Adrenal gland (tissue), 19 donors: ENCODE measurements at regions of chr16 and their contacts with region 1.

Region 1: DNA sequence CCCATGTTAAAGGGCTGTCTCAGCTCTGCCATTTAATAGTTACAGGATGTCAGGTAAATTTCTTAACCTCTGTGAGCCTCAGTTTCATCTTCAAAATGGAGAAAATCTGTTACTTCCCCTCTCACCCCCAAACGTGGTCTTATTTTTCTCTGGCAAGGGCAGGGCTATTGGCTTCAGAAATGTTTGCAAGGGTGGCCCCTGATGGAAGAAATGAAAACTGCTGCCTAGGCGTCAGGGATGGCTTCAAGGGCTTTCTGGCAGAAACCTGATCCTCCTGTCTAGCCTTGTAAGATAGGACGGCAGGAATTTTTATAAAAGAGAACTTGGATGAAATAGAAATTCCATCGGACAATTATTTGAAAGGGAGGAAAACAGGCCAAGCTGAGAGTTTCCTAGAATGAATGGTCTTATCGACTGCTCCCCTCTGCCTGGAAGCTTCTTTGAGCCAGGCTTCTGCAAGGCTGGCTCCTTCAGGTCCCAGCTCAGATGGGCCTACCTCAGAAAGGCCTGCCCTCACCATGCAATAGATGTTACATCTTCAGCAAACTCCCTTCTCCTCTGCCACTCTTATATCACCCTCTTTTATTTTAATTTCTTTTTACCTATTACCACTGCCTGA is 43.0 kb upstream of the TANGO6 start:
- DNase-seq: peak; percentile 25 to 78 (median 60)
- H3K4me3 ChIP-seq: no peak overlapping the region
- H3K27ac ChIP-seq: no peak overlapping the region
- H3K4me1 ChIP-seq: no peaks in the 10 kb centered on the region
- H3K27me3 ChIP-seq: no peaks in the 10 kb centered on the region
- CTCF ChIP-seq: peak; percentile 29 to 72 (median 47)
- POLR2A ChIP-seq: no peak

Region 2: DNA sequence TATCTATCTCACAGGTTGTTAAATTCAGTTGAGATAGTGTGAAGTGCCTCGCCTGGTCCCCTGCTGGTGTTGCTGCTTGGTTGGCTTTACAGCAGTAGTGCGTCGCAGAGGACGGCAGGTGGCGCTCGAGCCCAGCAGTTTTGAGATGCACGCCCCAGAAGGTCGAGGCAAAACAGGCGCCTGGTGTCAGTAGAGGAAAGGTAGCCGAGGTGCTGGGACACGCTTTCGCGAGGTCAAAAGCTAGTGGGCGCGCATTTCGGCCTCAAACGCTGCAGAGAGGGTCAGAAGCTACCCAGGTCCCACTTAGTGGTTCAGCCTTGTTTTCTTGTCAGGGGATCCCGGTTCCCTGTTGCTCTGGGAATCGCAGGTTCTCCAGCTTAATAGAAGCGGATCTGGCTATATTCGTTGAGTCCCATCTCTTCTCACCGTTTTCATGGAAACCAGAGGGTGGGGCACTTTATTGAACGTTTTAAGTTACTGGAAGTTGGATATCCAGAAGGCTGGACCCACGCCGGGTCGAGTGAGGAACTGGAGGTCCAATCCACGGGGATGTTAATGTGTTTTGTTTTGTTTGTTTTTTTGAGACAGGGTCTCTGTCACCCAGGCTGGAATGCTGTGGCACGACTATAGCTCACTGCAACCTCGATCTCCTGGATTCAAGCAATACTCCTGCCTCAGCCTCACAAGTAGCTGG is 271.5 kb before region 1 on chr16:
- intact Hi-C with region 1: loop called in 1 of 2 experiments (anchors 10 kb)
- DNase-seq: peak; percentile 80 to 94 (median 84)
- H3K4me3 ChIP-seq: peak overlapping the region in 1 of 4 donors; percentile 25
- H3K27ac ChIP-seq: no peak overlapping the region
- H3K4me1 ChIP-seq: peaks cover 4 to 19% of the 10 kb centered on the region in 2 donors
- H3K27me3 ChIP-seq: no peaks in the 10 kb centered on the region
- CTCF ChIP-seq: peak; percentile 89 to 95 (median 94)
- POLR2A ChIP-seq: no peak

Region 3: GRCh38 chr16:68676113-68676860 is 124.1 kb before region 1 on chr16:
- intact Hi-C with region 1: no loop called
- DNase-seq: no peak
- H3K4me3 ChIP-seq: no peak overlapping the region
- H3K27ac ChIP-seq: no peak overlapping the region
- H3K4me1 ChIP-seq: no peaks in the 10 kb centered on the region
- H3K27me3 ChIP-seq: no peaks in the 10 kb centered on the region
- CTCF ChIP-seq: no peak
- POLR2A ChIP-seq: no peak

Region 4: GRCh38 chr16:68704232-68704867 is 96.0 kb before region 1 on chr16:
- intact Hi-C with region 1: loop called in 1 of 2 experiments (anchors 5 kb)
- DNase-seq: peak; percentile 56 to 86 (median 73)
- H3K4me3 ChIP-seq: no peak overlapping the region
- H3K27ac ChIP-seq: no peak overlapping the region
- H3K4me1 ChIP-seq: no peaks in the 10 kb centered on the region
- H3K27me3 ChIP-seq: no peaks in the 10 kb centered on the region
- CTCF ChIP-seq: peak; percentile 45 to 69 (median 62)
- POLR2A ChIP-seq: no peak

Region 5: GRCh38 chr16:69351309-69352027 is 551.1 kb after region 1 on chr16 and contains the start of gene TMED6:
- intact Hi-C with region 1: no loop called
- DNase-seq: no peak
- H3K4me3 ChIP-seq: no peak within 1 kb of the TSS
- H3K27ac ChIP-seq: no peak within 1 kb of the TSS
- H3K4me1 ChIP-seq: peaks cover 0 to 9% of the 10 kb centered on the region in 2 donors
- H3K27me3 ChIP-seq: no peaks in the 10 kb centered on the region
- CTCF ChIP-seq: no peak
- POLR2A ChIP-seq: no peak
- total RNA-seq, gene TMED6: 0.22 to 0.56 (median 0.42) TPM in 5 of 9 donors, not detected in the others